Activated CD4-positive, alpha-beta memory T cell treated with anti-CD3 and anti-CD28 coated beads for 36 hours (primary cell): ENCODE measurements at regions of chr9 and their contacts with region 1.

Region 1: DNA sequence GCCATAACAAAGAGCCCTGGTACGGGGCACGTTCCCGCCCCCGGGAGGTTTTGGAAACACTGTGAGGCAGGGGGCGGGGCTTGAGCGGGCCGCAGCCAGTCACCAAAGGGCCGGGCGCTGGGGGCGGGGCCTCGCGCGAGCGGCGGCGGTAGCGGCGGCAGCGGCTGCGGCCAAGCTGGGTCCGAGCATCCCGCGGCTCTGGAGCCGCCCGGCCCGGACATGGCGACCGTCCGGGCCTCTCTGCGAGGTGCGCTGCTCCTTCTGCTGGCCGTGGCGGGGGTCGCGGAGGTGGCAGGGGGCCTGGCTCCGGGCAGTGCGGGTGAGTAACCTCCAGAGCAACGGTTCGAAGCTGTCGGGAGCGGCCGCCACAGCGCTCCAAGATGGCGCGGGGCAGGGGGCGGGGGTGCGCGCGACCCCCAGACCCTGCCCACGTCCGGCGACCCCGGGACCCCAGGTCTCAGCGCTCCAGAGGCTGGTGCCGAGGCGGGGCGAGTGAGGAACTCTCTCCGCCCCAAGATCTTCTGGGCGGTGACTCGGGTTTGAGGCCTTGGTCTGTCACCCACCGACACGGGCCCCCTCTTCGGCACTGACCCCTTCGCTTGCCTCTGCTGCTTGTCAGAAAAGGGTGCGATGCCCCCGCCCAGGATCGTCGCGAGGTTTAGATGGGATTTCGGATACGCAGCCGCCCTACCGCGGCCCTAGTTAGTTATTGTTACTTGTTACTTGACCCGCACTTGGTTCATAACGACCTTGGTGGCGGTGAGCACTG is at the start of gene RECK:
- DNase-seq: peak; percentile 93
- H3K4me3 Mint-ChIP-seq: peak within 1 kb of the TSS; percentile 81
- H3K27ac Mint-ChIP-seq: peak within 1 kb of the TSS; percentile 2
- H3K4me1 Mint-ChIP-seq: peaks cover 37% of the 10 kb centered on the region
- H3K27me3 Mint-ChIP-seq: peaks cover under 1% of the 10 kb centered on the region
- total RNA-seq, gene RECK: 6.1 to 7.2 TPM

Region 2: GRCh38 chr9:35948901-35949318 is 88.1 kb before region 1 on chr9:
- CTCF ChIA-PET with region 1: no interaction called
- POLR2A ChIA-PET with region 1: no interaction called
- intact Hi-C with region 1: no loop called
- DNase-seq: no peak
- H3K4me3 Mint-ChIP-seq: no peak overlapping the region
- H3K27ac Mint-ChIP-seq: no peak overlapping the region
- H3K4me1 Mint-ChIP-seq: peaks cover 33% of the 10 kb centered on the region
- H3K27me3 Mint-ChIP-seq: no peaks in the 10 kb centered on the region

Region 3: GRCh38 chr9:36023260-36024048 is 13.5 kb before region 1 on chr9:
- CTCF ChIA-PET with region 1: interaction called, 14 read pairs
- POLR2A ChIA-PET with region 1: no interaction called
- intact Hi-C with region 1: no loop called
- DNase-seq: peak; percentile 77
- H3K4me3 Mint-ChIP-seq: no peak overlapping the region
- H3K27ac Mint-ChIP-seq: no peak overlapping the region
- H3K4me1 Mint-ChIP-seq: no peaks in the 10 kb centered on the region
- H3K27me3 Mint-ChIP-seq: no peaks in the 10 kb centered on the region

Region 4: DNA sequence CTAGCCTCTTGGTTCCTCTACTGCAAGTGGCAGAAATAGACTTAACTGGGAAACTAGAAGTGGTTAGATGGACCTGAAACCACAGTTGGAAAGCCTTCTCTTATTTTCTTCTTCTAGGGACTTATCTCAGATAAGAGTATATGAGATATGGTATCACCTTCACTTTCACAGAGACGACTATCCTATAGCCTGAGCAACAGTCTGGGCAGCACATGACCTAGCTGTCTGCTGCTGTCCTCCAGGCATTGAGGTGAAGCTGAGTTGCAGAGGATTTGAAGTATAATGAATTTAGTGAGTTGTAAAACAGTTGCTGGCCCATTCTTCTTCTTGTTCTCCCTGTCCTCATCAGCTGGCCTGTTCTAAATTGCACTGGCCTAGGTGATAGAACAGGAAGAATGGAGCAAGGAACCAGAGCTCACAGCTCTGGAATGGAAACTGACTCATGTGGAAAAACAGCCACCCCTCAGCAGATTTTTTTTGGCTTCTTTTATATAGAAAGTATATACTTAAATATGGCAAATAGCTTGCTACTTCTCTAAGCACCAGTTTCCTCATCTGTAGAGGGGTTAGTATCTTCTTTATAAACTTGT is 27.6 kb after region 1 on chr9:
- CTCF ChIA-PET with region 1: no interaction called
- POLR2A ChIA-PET with region 1: no interaction called
- intact Hi-C with region 1: no loop called
- DNase-seq: no peak
- H3K4me3 Mint-ChIP-seq: no peak overlapping the region
- H3K27ac Mint-ChIP-seq: no peak overlapping the region
- H3K4me1 Mint-ChIP-seq: peaks cover 4% of the 10 kb centered on the region
- H3K27me3 Mint-ChIP-seq: no peaks in the 10 kb centered on the region

Region 5: GRCh38 chr9:36092509-36093215 is 55.7 kb after region 1 on chr9:
- CTCF ChIA-PET with region 1: no interaction called
- POLR2A ChIA-PET with region 1: no interaction called
- intact Hi-C with region 1: loop called (anchors 5 kb)
- DNase-seq: peak; percentile 62
- H3K4me3 Mint-ChIP-seq: no peak overlapping the region
- H3K27ac Mint-ChIP-seq: peak overlapping the region; percentile 26
- H3K4me1 Mint-ChIP-seq: peaks cover 14% of the 10 kb centered on the region
- H3K27me3 Mint-ChIP-seq: no peaks in the 10 kb centered on the region

Region 6: GRCh38 chr9:36136272-36136893 is 99.4 kb after region 1 on chr9 and contains the start of gene GLIPR2:
- CTCF ChIA-PET with region 1: no interaction called
- POLR2A ChIA-PET with region 1: no interaction called
- intact Hi-C with region 1: loop called (anchors 5 kb)
- DNase-seq: peak; percentile 84
- H3K4me3 Mint-ChIP-seq: peak within 1 kb of the TSS; percentile 79
- H3K27ac Mint-ChIP-seq: peak within 1 kb of the TSS; percentile 48
- H3K4me1 Mint-ChIP-seq: peaks cover 45% of the 10 kb centered on the region
- H3K27me3 Mint-ChIP-seq: no peaks in the 10 kb centered on the region
- total RNA-seq, gene GLIPR2: 24.7 to 25.8 TPM